Aorta (tissue), 5 donors: ENCODE measurements at regions of chr4 and their contacts with region 1.

Region 1: DNA sequence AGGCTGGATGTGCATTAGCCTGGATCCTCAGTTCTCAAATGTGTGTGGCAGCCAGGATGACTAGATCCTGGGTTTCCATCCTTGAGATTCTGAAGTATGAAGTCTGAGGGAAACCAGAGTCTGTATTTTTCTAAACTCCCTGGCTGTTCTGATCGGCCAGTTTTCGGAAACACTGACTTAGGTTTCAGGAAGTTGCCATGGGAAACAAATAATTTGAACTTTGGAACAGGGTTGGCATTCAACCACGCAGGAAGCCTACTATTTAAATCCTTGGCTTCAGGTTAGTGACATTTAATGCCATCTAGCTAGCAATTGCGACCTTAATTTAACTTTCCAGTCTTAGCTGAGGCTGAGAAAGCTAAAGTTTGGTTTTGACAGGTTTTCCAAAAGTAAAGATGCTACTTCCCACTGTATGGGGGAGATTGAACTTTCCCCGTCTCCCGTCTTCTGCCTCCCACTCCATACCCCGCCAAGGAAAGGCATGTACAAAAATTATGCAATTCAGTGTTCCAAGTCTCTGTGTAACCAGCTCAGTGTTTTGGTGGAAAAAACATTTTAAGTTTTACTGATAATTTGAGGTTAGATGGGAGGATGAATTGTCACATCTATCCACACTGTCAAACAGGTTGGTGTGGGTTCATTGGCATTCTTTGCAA is 67.6 kb downstream of the PDGFRA start:
- DNase-seq: no peak
- ATAC-seq: peak; percentile 73
- H3K4me3 ChIP-seq: no peak overlapping the region
- H3K27ac ChIP-seq: peak overlapping the region; percentile 93 to 95
- H3K4me1 ChIP-seq: peaks cover 3 to 5% of the 10 kb centered on the region in 2 donors
- H3K27me3 ChIP-seq: no peaks in the 10 kb centered on the region

Region 2: DNA sequence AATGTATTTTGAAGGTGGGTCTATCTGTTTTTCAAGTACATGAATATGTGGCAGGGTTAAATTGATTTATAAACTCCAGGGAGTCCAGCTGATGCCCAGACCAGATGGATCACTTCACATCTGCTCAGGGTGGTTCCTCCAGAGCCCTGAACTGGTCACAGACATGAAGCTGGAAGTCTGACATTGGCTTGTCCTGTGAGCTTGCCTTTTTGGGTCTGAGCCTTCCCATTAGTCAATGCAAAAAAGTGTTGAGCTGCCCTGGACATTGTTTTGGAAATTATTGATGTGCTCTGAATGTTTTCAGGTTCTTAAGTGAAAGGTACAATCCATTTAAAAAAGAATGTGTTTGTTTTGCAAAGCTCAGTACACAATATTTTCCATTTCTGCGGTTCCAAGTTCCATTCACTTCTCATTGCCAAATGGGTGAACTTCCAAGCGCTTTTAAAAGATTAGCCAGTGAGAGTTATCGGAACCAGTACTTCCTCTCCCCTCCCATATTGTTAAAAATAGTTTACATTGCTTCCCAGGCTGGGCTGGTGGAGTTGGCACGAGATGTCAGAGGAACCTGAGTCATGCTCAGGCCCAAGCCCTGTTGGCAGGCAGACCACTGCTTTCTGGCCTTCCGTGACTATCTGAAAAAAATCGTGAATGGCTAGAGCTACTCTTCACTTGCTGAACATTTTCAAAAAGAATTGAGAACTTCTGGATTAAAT is 15.5 kb before region 1 on chr4:
- intact Hi-C with region 1: loop called in 1 of 2 experiments (anchors 1 kb)
- DNase-seq: peak; percentile 91 to 93
- ATAC-seq: peak; percentile 92
- H3K4me3 ChIP-seq: no peak overlapping the region
- H3K27ac ChIP-seq: peak overlapping the region; percentile 65 to 98
- H3K4me1 ChIP-seq: peaks cover 6 to 11% of the 10 kb centered on the region in 2 donors
- H3K27me3 ChIP-seq: no peaks in the 10 kb centered on the region